ENCODE measurements at regions of chr18 and their contacts with region 1.

Region 1: GRCh38 chr18:3281456-3282400 is 19.8 kb downstream of the MYL12B start:
- DNase-seq: peak in 4 of 5 donors; percentile 69 to 73 (median 72)
- H3K4me3 ChIP-seq: no peak overlapping the region
- H3K4me3 Mint-ChIP-seq: no peak overlapping the region
- H3K27ac ChIP-seq: no peak overlapping the region
- H3K27ac Mint-ChIP-seq: no peak overlapping the region
- H3K4me1 ChIP-seq: no peaks in the 10 kb centered on the region
- H3K4me1 Mint-ChIP-seq: peaks cover 0 to 4% (median 1%) of the 10 kb centered on the region in 4 donors
- H3K27me3 ChIP-seq: no peaks in the 10 kb centered on the region
- H3K27me3 Mint-ChIP-seq: no peaks in the 10 kb centered on the region

Region 2: GRCh38 chr18:3321133-3321812 is 39.5 kb after region 1 on chr18:
- CTCF ChIA-PET with region 1: interaction called, 5 read pairs
- POLR2A ChIA-PET with region 1: no interaction called
- intact Hi-C with region 1: loop called (anchors 1 kb)
- DNase-seq: no peak
- H3K4me3 ChIP-seq: no peak overlapping the region
- H3K4me3 Mint-ChIP-seq: no peak overlapping the region
- H3K27ac ChIP-seq: no peak overlapping the region
- H3K27ac Mint-ChIP-seq: peak overlapping the region in 1 of 7 donors; percentile 7
- H3K4me1 ChIP-seq: no peaks in the 10 kb centered on the region
- H3K4me1 Mint-ChIP-seq: peaks cover 0 to 2% (median 0%) of the 10 kb centered on the region in 4 donors
- H3K27me3 ChIP-seq: no peaks in the 10 kb centered on the region
- H3K27me3 Mint-ChIP-seq: peaks cover 6% of the 10 kb centered on the region in 2 donors

Measured in CD4-positive, alpha-beta memory T cell (primary cell).